ENCODE measurements at regions of chr11 and their contacts with region 1.

Region 1: GRCh38 chr11:67545280-67545679 is 22.0 kb upstream of the CABP2 start:
- DNase-seq: no peak
- H3K4me3 ChIP-seq: no peak overlapping the region
- CTCF ChIP-seq: no peak
- POLR2A ChIP-seq: no peak

Region 2: GRCh38 chr11:67556244-67556643 is 11.0 kb after region 1 on chr11:
- intact Hi-C with region 1: loop called (anchors 1 kb)
- DNase-seq: no peak
- H3K4me3 ChIP-seq: no peak overlapping the region
- CTCF ChIP-seq: no peak
- POLR2A ChIP-seq: no peak

Measured in lower leg skin (tissue), 4 donors.